GM13976 (cell line): ENCODE measurements at regions of chr14 and their contacts with region 1.

Region 1: DNA sequence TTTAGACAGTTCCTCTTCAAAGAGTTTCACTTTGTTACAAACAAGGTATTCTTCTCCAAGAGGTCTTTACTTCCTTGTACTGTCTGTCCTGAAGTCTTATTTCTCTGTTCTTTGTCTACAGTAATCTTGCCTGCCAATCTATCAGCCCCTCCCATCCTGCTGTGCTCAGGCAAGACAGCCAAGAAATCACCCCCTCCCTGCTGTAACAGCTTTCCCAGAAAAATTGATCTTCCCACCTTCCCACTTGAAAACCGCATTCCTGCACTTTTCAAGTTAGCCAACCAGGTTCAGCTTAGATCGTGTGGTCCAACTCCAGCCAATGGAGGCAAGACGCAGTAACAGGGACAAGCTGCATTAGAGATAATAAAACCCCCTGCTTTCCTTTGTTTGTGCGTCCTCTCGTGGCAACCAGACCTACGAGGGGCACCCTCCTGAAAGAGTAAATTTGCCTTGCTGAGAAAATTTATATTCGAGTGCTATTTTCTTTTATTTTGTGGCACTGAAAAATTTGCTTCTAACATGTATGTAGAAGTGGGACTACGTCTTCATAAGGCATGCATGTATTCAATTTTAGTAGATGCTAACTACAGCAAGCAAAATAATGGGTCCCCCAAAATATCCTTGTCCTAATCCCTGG is 46.5 kb upstream of the ESR2 start:
- DNase-seq: no peak
- CTCF ChIP-seq: no peak

Region 2: GRCh38 chr14:64478634-64479250 is 138.1 kb after region 1 on chr14:
- in situ Hi-C with region 1: loop called (anchors 10 kb)
- DNase-seq: peak; percentile 38
- CTCF ChIP-seq: no peak

Region 3: GRCh38 chr14:64636208-64636979 is 295.7 kb after region 1 on chr14:
- in situ Hi-C with region 1: loop called (anchors 10 kb)
- DNase-seq: peak; percentile 84
- CTCF ChIP-seq: peak; percentile 76